ENCODE measurements at regions of chr6 and their contacts with region 1.

Region 1: DNA sequence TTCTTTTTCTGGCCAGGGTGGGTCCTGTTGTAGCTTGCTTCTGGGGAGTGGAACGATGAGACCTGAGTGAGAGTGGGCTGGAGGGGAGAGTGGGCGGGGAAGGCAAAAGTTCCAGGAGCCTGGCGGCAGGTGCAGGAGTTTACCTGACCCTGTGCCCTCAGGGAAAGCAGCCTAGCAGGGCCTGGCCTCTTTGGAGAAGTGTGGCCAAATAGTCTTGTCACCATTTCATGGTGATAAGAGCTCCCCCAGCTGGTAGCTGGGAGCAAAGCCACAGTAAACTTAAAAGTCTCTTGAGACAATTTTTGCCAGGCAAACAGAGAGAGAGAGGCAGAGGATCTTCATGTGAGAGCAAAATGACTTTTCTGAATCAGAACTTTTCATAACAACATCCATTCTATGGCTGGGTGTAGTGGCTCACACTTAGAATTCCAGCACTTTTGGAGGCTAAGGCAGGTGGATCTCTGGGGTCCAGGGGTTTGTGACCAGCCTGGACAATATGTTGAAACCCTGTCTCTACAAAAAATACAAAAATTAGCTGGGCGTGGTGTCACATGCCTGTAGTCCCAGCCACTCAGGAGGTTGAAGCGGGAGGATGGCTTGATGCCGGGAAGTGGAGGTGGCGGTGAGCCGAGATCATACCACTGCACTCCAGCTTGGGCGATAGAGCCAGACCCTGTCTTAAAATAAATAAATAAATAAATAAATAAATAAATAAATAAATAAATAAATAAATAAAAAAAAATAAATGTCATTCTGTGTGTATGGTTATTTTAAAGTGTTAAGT is 161.8 kb upstream of the SCGN start:
- DNase-seq: peak; percentile 80
- H3K4me3 Mint-ChIP-seq: no peak overlapping the region
- H3K27ac Mint-ChIP-seq: no peak overlapping the region
- H3K4me1 Mint-ChIP-seq: peaks cover 6% of the 10 kb centered on the region
- H3K27me3 Mint-ChIP-seq: no peaks in the 10 kb centered on the region

Region 2: DNA sequence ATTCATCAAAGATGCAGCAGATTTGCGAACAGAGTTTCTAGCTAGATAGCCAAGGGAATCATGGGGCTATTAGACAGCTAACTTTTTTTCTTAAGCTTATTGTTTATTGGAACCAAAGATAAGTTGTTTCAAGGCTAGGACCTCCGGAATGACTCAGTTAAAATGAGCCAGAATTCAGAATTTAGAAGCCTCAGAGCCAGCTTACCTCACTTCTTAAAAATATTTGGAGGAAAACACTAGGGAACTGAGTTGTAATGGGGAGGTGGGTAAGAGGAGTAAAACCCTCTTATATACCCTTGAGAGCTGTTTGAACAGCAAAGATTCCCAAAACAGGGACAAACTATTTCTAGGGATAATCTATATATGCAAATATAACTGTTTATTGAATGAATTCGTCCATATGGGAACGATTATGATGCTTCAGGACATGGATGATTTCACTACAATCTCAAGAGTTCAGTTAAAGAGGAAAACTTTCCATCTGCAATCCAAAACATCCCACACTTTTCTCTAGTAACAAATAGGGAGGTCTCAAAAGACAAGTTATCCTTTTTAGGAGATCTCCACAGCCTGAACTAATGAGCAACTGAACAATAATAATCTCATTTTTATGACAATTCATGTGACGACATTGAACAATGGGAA is 223.6 kb before region 1 on chr6:
- CTCF ChIA-PET with region 1: interaction called, 19 read pairs
- POLR2A ChIA-PET with region 1: interaction called, 3 read pairs
- DNase-seq: no peak
- H3K4me3 Mint-ChIP-seq: no peak overlapping the region
- H3K27ac Mint-ChIP-seq: no peak overlapping the region
- H3K4me1 Mint-ChIP-seq: peaks cover 2% of the 10 kb centered on the region
- H3K27me3 Mint-ChIP-seq: peaks cover 23% of the 10 kb centered on the region

Region 3: DNA sequence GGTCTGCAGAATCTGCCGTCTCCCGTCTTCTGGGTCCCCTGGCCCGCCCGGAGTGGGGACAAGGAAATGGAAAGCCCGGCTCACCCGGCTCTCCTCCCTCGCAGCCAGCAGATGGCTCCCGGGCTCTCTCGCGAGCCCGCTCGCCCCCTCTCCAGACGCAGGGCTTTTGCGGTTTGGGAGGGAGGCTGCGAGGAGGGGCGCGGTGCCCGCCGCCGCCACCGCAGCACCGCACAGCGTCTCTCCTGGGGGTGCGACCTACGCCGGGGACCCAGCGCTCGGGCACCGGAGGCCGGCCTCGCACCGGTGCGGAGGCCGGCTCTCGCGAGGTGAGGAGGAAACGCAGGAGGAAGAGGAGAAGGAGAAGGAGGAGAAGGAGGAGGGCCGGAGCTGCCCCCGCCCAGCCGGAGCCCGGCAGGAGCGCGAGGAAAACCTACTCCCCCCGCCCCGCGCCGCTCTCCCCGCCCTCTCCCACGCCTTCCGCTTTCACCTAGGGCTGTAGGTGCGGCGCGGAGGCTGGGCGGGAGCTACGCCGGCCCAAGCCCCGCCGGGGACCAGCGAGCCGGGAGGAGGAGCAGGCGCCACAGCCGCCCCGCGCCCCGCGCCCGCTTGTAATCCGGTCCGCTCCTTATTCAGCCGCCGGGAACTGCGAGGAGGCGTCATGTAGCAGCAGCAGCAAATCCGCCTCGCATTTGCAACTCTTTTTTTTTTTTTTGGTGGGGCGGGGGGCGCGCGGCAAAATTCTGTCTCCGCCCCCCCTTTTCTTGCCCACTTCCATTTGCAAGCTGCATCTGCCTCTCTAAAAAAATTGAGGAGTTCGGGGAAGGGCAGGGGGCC is 211.1 kb before region 1 on chr6 and contains the start of gene CARMIL1:
- CTCF ChIA-PET with region 1: interaction called, 17 read pairs
- POLR2A ChIA-PET with region 1: interaction called, 4 read pairs
- DNase-seq: peak; percentile 76
- H3K4me3 Mint-ChIP-seq: peak within 1 kb of the TSS; percentile 82
- H3K27ac Mint-ChIP-seq: peak within 1 kb of the TSS; percentile 81
- H3K4me1 Mint-ChIP-seq: peaks cover 24% of the 10 kb centered on the region
- H3K27me3 Mint-ChIP-seq: peaks cover 8% of the 10 kb centered on the region
- total RNA-seq, gene CARMIL1: 5.0 to 5.4 TPM

Region 4: DNA sequence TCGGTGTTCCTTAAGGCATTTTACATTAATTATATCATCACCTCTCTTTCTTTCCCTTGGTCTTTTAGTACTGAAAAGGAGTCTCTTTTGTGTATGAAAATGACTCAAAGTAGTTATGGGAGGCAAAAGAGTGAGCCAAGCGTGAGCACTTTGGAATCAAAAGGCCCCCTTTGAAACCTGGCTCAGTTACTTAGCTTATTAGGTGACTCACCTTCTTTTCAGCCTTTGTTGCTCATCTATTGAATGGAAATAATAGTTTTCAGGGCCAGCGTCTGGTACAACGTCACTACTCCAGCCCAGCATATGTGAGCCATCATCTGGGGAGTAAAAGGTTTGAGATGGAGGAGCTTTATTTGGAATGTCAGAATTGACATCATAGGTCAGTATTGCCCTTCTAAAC is 14.5 kb after region 1 on chr6:
- CTCF ChIA-PET with region 1: no interaction called
- POLR2A ChIA-PET with region 1: no interaction called
- DNase-seq: no peak
- H3K4me3 Mint-ChIP-seq: no peak overlapping the region
- H3K27ac Mint-ChIP-seq: no peak overlapping the region
- H3K4me1 Mint-ChIP-seq: no peaks in the 10 kb centered on the region
- H3K27me3 Mint-ChIP-seq: no peaks in the 10 kb centered on the region

Measured in activated CD4-positive, alpha-beta T cell treated with anti-CD3 and anti-CD28 coated beads, Interleukin-2, amount 10 ng/mL, durations not matched to agents 7 days and 5 days (primary cell).